BJ (cell line): ENCODE measurements at regions of chr9 and their contacts with region 1.

Region 1: DNA sequence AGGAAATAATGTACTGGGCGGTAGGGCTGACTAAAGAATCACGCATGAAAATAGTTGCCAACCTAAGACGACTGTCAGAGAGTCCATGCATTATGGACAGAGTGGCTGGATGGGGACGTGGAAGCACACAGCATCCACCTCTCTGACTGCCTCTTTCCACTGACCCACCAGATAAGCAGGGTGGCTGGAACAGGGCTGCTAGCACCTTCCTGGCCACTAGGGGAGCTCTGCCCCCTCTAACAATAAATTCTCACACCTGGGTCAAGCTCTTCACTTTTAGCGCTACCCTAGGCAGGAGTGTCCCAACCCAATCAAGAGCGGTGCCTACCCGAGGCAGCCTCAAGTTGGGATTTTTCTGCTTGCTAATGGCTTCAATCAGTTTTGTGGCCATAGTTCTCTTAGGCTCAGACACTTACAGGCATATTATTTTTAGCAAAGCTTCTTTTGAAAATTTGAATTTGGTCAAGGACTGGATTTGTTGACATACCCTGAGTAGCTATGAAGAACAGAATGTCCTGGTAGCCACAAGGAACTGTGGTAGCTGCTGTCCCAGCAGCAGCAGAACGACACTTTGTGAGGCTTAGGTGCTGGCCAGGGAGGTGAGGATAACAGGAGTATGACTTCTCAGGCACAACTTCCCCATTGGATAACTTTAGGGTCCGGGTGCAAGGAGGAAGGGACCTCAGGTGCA is 6.9 kb upstream of the TPM2 start:
- DNase-seq: no peak
- H3K4me3 ChIP-seq: no peak overlapping the region
- H3K27me3 ChIP-seq: no peaks in the 10 kb centered on the region
- CTCF ChIP-seq: peak; percentile 87

Region 2: DNA sequence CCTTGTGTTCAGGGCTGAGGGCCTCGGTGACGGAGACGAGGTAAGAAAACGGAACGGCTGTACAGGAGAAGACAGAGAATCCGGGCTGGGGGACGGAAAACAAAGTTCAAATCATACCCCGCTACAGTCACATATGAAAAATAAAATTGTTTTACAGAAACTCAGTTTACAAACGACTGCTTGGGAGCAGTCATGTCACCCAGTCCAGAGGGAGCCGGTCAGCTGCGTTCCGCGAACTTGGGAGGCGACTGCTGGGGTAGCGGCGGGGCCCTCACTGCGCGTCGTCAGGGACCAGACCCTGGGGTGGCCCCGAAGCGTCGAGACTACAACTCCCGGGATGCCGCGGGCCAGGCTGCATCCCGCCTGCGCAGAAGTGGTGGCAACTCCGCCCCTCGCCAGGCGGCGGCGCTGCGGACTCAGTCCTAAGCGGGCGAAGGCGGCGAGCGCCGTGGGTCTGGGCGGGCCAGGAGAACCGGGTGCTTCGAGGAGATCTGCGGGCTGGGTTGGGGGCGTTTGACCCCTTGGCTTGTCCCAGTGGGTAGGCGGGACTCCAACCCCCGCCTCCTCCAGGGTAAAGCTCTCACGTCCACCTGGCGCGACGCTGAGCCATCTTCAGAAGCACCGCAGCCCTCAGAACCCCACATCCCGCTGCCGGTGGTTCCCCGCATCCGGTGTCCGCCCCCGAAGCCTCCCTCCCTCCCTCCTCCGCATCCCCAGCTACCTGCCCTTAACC is 50.0 kb before region 1 on chr9:
- CTCF ChIA-PET with region 1: interaction called, 40 read pairs
- POLR2A ChIA-PET with region 1: no interaction called
- DNase-seq: no peak
- H3K4me3 ChIP-seq: peak overlapping the region; percentile 48
- H3K27me3 ChIP-seq: no peaks in the 10 kb centered on the region
- CTCF ChIP-seq: peak; percentile 95

Region 3: GRCh38 chr9:35657546-35658136 is 39.0 kb before region 1 on chr9 and contains the start of gene RMRP:
- CTCF ChIA-PET with region 1: interaction called, 63 read pairs
- POLR2A ChIA-PET with region 1: no interaction called
- DNase-seq: peak; percentile 98
- H3K4me3 ChIP-seq: peak within 1 kb of the TSS; percentile 69
- H3K27me3 ChIP-seq: no peaks in the 10 kb centered on the region
- CTCF ChIP-seq: peak; percentile 36; the same call in 1 of the 2 replicates
- polyA plus RNA-seq, gene RMRP: 235 and 1,738 TPM in 2 replicates

Region 4: DNA sequence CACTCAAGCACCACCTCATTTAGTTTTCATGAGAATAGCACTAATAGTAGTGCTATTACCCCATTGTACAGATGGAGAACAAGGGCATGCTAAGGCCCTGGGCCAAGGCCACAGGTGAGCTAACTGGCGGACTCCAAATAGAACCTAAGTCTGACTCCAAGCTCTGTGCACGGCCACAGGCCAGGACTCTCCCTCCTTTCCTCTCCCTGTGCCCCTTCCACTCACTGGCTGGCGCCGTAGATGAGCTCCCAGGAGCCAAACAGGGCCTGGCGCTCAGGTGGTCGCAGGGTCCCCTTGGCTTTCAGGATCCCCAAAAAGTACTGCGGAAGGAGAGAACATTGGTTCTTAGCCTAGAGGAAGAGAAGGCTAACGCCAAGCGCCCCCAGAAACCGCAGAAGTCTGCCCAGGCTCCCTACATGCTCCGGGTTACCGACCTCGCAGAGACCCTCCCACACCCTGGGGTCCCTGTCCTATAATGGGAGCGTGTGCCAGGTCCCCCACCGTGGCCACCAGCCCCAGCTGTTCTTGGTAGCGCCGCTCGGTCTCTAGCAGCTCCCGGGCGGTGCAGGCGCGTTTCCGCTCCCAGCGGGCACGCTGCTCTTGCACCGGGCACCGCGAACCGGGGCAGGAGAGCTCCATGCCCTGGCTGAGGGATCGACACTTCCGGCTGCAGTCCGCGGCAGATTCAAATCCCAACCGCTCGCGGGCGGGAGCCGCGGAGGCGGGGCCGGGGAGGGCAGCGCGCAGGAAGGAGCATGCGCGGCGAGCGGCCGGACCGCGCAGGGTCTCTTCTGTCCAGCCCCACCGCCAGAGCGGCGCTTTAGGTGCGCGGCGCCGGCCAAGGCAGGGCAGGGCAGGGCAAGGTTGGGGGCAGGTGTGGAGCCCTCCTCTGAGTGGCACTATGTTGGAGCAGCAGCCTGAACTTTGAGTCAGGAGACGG is 31.9 kb before region 1 on chr9 and contains the start of gene ARHGEF39:
- CTCF ChIA-PET with region 1: interaction called, 63 read pairs
- POLR2A ChIA-PET with region 1: interaction called, 14 read pairs
- DNase-seq: no peak
- H3K4me3 ChIP-seq: peak within 1 kb of the TSS; percentile 59
- H3K27me3 ChIP-seq: no peaks in the 10 kb centered on the region
- CTCF ChIP-seq: peak; percentile 41
- polyA plus RNA-seq, gene ARHGEF39: 2.7 and 4.1 TPM in 2 replicates

Region 5: GRCh38 chr9:35675732-35676392 is 20.8 kb before region 1 on chr9:
- CTCF ChIA-PET with region 1: interaction called, 29 read pairs
- POLR2A ChIA-PET with region 1: no interaction called
- DNase-seq: no peak
- H3K4me3 ChIP-seq: peak overlapping the region; percentile 38
- H3K27me3 ChIP-seq: no peaks in the 10 kb centered on the region
- CTCF ChIP-seq: no peak

Region 6: DNA sequence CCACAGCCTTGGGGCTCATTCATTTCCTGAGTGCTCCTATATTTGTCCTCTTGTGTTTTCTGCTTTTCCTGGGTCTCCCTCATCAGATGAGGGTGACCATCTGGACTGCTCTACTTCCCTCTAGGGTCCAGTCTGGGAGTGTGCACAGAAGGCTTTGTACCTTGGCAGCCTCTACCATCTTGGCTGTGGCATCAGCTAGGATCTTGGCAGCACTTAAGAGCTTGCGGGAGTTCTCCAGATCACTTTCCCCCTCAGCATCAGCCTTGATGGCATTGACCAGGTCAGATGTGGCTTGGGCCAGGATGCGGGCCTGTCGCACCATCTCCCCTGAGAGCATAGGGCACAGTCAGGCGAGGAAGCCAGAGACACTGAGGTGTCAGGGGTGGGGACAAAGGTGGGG is 19.6 kb after region 1 on chr9:
- CTCF ChIA-PET with region 1: interaction called, 177 read pairs
- POLR2A ChIA-PET with region 1: no interaction called
- DNase-seq: no peak
- H3K4me3 ChIP-seq: no peak overlapping the region
- H3K27me3 ChIP-seq: no peaks in the 10 kb centered on the region
- CTCF ChIP-seq: no peak